Activated CD8-positive, alpha-beta memory T cell treated with anti-CD3 and anti-CD28 coated beads, Interleukin-2, amount 10 ng/mL, durations not matched to agents 7 days and 5 days (primary cell): ENCODE measurements at regions of chr14 and their contacts with region 1.

Region 1: DNA sequence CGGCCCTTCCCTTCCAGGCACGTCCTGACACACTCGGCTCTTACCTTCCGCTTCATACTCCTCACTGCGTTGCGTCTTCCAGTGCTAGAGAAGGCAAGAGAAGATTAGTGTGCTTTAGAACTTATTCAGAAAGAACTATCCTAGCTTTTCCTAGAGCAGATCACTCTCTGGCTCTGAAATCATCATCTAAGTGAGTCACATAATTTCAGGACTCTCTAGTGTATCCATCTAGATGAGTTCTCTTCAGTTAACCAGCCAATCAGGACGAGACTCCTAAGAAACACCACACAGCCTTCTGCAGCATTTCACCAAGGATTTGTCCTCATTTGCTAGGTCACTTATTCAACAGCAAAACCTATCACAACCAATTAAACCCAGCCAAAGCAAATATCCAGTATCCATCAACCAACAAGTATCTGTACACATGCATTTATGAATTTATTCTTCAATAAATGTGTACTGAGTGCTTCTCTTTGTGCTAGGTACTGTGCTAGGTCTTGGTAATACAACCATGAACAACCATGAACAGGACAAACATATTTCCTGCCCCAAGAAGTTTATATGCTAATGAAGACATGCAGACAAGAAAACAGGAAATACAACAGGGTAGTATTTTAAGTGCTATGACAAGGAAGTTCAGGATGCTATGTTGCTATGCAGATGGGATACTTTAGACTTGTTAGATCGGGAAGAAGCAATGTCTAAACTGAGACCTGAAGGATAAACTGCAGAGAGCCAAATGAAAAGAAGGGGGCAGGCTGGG is 52.1 kb downstream of the NIN start:
- DNase-seq: no peak
- ATAC-seq: no peak
- H3K4me3 Mint-ChIP-seq: no peak overlapping the region
- H3K27ac Mint-ChIP-seq: peak overlapping the region; percentile 49
- H3K4me1 Mint-ChIP-seq: peaks cover 34% of the 10 kb centered on the region
- H3K27me3 Mint-ChIP-seq: no peaks in the 10 kb centered on the region

Region 2: DNA sequence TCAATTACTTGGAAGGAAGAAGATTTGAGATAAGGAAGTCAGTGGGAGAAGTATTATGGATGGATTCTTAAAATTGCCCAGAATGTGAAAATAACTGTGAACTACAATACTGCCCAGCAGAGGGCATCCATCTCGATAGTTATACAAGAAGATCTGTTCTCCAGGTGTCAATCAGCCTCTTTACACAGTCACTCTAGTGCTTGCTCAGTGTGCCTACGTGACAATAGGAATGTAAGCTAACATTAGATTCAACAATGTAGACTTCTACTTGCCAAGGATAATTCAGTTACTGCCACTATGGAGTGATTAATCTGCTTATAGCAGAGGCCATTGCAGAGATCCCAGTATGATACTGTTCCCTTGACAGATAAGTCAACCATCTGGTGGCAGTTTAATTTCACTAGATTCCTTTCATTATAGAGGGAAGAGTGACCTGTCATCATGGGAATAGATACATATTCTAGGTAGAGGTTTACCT is 235.9 kb before region 1 on chr14:
- CTCF ChIA-PET with region 1: interaction called, 14 read pairs
- DNase-seq: peak; percentile 46
- ATAC-seq: peak; percentile 76
- H3K4me3 Mint-ChIP-seq: no peak overlapping the region
- H3K27ac Mint-ChIP-seq: no peak overlapping the region
- H3K4me1 Mint-ChIP-seq: peaks cover 11% of the 10 kb centered on the region
- H3K27me3 Mint-ChIP-seq: peaks cover 7% of the 10 kb centered on the region

Region 3: DNA sequence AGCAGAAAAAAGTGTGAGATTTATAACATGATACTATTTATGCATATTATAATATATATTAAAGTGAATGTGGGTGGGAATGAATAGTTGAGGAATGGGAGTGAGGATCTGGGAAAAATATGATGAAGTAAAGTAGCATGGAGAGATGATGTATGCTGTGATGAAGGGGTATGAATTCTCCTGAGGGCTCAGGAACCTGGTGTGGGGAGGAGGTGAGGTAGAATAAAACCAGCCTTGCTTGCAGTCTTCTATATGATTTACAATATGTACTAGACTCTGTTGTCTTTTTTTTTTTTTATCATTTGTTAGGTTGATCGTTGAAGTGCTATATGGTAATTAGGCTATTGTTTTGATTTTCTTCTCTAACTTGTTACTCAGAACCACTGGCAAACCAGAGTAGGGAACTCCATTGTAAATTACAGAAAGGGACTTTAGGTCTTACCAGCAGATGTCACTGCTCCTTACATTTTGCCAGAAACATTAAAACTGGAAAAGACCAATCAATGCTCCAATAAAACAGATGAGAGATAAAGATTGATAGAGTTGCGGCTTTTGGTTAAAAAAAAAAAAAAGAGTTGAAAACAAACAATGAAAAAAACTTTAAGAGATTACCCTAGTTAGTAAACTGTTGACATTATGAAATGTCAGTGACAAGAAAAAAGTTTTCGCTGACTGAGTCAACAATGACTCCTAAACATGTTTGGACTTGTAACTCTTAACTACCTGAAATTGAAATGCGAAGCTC is 179.0 kb before region 1 on chr14:
- CTCF ChIA-PET with region 1: interaction called, 17 read pairs
- DNase-seq: no peak
- ATAC-seq: no peak
- H3K4me3 Mint-ChIP-seq: no peak overlapping the region
- H3K27ac Mint-ChIP-seq: no peak overlapping the region
- H3K4me1 Mint-ChIP-seq: peaks cover 3% of the 10 kb centered on the region
- H3K27me3 Mint-ChIP-seq: no peaks in the 10 kb centered on the region

Region 4: DNA sequence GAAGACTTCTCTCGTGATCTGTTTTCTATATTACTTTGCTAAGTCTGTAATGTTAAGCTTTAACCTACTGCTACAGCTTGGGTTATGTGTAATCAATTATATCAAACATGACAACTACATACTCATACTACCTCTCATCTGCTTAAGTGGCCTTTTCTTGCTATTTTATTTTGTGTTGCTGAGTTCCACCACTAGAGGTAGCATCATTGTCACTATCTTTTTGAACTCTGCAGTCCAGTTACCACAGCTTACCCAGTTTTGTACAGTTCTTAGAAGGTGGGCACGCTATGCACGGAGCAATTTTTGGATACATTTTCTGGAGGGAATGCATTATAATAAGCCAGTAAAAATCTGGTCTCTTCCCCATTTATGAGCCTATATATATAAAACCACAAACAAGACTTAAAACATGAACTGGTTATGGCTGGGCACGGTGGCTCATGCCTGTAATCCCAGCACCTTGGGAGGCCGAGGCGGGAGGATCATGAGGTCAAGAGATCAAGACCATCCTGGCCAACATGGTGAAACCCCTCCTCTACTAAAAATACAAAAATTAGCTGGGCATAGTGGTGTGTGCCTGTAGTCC is 159.3 kb before region 1 on chr14:
- CTCF ChIA-PET with region 1: interaction called, 12 read pairs
- DNase-seq: no peak
- ATAC-seq: peak; percentile 55
- H3K4me3 Mint-ChIP-seq: no peak overlapping the region
- H3K27ac Mint-ChIP-seq: no peak overlapping the region
- H3K4me1 Mint-ChIP-seq: peaks cover 2% of the 10 kb centered on the region
- H3K27me3 Mint-ChIP-seq: peaks cover 2% of the 10 kb centered on the region

Region 5: DNA sequence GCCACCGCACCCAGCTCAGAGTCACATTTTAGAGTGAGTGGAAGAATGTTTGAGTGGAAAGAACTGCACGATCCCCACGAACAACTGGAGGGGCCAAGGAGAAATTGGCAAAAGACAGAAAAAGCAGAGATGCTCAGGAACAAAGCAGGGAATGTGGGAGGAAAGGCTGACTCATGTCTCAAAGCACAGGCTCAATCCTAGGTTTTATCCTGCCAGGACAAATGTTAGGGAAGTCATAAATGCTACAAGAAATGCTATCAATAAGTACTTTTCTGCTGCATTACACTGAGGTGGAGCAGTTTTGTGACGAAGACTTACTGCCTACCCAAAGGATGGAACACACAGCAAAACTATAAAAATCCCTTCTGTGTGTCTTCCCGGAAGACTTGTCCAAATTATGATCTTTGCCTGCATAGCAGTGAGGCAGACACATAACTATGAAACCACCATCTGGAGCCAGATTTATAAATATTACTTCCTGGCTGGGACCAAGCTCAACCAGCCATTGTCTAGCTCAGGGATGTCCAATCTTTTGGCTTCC is 25.3 kb after region 1 on chr14:
- CTCF ChIA-PET with region 1: no interaction called
- DNase-seq: no peak
- ATAC-seq: no peak
- H3K4me3 Mint-ChIP-seq: no peak overlapping the region
- H3K27ac Mint-ChIP-seq: no peak overlapping the region
- H3K4me1 Mint-ChIP-seq: peaks cover 4% of the 10 kb centered on the region
- H3K27me3 Mint-ChIP-seq: no peaks in the 10 kb centered on the region

Region 6: GRCh38 chr14:50823051-50823761 is 44.3 kb after region 1 on chr14:
- CTCF ChIA-PET with region 1: interaction called, 14 read pairs
- DNase-seq: no peak
- ATAC-seq: peak; percentile 12
- H3K4me3 Mint-ChIP-seq: peak overlapping the region; percentile 68
- H3K27ac Mint-ChIP-seq: peak overlapping the region; percentile 88
- H3K4me1 Mint-ChIP-seq: peaks cover 75% of the 10 kb centered on the region
- H3K27me3 Mint-ChIP-seq: no peaks in the 10 kb centered on the region